ENCODE measurements at regions of chr3 and their contacts with region 1.

Region 1: GRCh38 chr3:121834696-121835464 is at the starts of genes EAF2 and IQCB1:
- DNase-seq: peak; percentile 93 to 98 (median 97)
- ATAC-seq: peak; percentile 99
- H3K4me3 ChIP-seq: peak within 1 kb of the TSS; percentile 85
- H3K4me3 Mint-ChIP-seq: peak within 1 kb of the TSS; percentile 83 to 97 (median 93)
- H3K27ac ChIP-seq: peak within 1 kb of the TSS; percentile 89
- H3K27ac Mint-ChIP-seq: peak within 1 kb of the TSS; percentile 78 to 98 (median 92)
- H3K4me1 ChIP-seq: peaks cover 10 to 14% of the 10 kb centered on the region in 2 donors
- H3K4me1 Mint-ChIP-seq: peaks cover 32 to 65% (median 58%) of the 10 kb centered on the region in 7 donors
- H3K27me3 ChIP-seq: no peaks in the 10 kb centered on the region
- H3K27me3 Mint-ChIP-seq: no peaks in the 10 kb centered on the region
- total RNA-seq, gene EAF2: 6.4 to 16.1 (median 7.5) TPM
- total RNA-seq, gene IQCB1: 32.6 to 45.6 (median 35.8) TPM

Region 2: DNA sequence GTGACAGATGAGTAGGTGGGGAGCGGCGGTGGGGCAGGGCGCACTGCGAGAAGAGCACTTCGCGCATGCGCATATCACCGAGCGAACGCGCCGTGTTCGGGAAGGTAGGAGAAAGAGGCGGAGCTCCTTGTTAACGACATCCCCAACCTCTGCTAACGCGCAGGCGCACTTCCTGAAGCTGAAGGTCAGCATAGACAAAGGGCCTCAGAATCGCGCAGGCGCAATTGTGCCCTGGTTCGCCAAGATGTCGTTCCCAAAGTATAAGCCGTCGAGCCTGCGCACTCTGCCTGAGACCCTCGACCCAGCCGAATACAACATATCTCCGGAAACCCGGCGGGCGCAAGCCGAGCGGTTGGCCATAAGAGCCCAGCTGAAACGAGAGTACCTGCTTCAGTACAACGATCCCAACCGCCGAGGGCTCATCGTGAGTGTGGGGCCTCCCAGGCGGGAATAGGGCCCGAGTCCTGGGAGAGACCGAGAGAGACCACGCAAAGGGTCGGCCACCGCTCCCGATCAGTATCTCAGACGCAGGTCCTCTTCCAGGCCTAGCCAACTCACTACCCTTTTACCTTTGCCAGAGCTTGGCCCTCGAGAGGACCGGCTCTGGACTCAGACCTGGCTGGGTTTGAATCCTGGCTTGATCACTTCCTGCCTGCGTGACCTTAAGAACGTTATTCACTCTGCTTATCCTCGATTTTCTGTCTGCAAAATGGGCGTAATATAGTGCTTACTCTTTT is 1238.6 kb before region 1 on chr3 and contains the start of gene NDUFB4:
- CTCF ChIA-PET with region 1: no interaction called
- POLR2A ChIA-PET with region 1: no interaction called
- intact Hi-C with region 1: loop called in 1 of 2 experiments (anchors 2 kb)
- DNase-seq: peak; percentile 84 to 97 (median 93)
- ATAC-seq: peak; percentile 97
- H3K4me3 ChIP-seq: peak within 1 kb of the TSS; percentile 99
- H3K4me3 Mint-ChIP-seq: peak within 1 kb of the TSS in 8 of 10 donors; percentile 85 to 99 (median 96)
- H3K27ac ChIP-seq: peak within 1 kb of the TSS; percentile 92
- H3K27ac Mint-ChIP-seq: peak within 1 kb of the TSS in 5 of 9 donors; percentile 94 to 99 (median 98)
- H3K4me1 ChIP-seq: peaks cover 25 to 27% of the 10 kb centered on the region in 2 donors
- H3K4me1 Mint-ChIP-seq: peaks cover 0 to 20% (median 11%) of the 10 kb centered on the region in 7 donors
- H3K27me3 ChIP-seq: no peaks in the 10 kb centered on the region
- H3K27me3 Mint-ChIP-seq: peaks cover 0 to 20% (median 0%) of the 10 kb centered on the region in 5 donors
- total RNA-seq, gene NDUFB4: 63.4 to 126 (median 76.2) TPM

Region 3: DNA sequence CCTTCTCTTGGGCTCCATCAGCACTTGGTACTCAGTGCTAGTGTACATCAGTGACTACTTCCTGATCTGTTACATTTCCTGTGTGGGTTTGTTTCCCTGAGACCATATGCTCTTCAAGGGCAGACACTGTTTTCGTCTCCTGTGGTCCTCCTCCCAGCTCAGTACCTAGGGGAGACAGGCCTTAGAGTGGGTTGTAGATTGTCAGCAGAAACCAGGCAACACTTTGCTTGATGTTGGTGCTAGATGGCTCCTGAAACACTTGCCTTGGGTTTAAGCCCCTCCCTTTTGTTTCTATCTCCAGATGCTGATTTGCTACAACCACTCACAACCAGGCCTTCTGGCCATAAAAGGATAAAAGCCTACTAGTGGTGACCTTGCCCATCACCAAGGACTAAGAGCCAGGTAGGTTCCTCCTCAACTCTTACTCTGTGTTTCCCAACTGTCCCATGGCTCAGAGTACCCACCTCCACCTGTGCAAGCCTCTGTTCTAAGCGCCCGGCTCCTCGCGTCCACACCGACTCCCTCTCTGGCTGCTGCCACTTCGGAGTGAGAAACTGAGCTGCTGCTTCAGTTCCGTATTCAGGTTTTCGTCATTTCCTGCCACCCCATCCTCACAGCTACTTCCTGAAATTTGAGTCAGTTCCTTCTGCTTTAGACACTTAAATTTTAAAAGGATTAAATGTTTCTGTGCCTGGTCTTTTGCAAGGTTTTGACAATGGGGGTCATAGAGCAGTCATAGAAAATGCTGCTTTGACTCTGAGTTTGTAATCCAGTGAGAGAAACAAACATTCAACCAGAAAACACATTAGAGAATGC is 174.3 kb before region 1 on chr3 and contains the start of gene HCLS1:
- CTCF ChIA-PET with region 1: no interaction called
- POLR2A ChIA-PET with region 1: interaction called, 4 read pairs
- intact Hi-C with region 1: loop called (anchors 1 kb)
- DNase-seq: peak; percentile 60 to 87 (median 79)
- ATAC-seq: peak; percentile 87
- H3K4me3 ChIP-seq: peak within 1 kb of the TSS; percentile 90
- H3K4me3 Mint-ChIP-seq: peak within 1 kb of the TSS; percentile 82 to 99 (median 95)
- H3K27ac ChIP-seq: peak within 1 kb of the TSS; percentile 90
- H3K27ac Mint-ChIP-seq: peak within 1 kb of the TSS; percentile 96 to 100 (median 99)
- H3K4me1 ChIP-seq: peaks cover 34 to 41% of the 10 kb centered on the region in 2 donors
- H3K4me1 Mint-ChIP-seq: peaks cover 41 to 68% (median 57%) of the 10 kb centered on the region in 7 donors
- H3K27me3 ChIP-seq: no peaks in the 10 kb centered on the region
- H3K27me3 Mint-ChIP-seq: no peaks in the 10 kb centered on the region
- total RNA-seq, gene HCLS1: 275 to 357 (median 311) TPM

Region 4: GRCh38 chr3:122356415-122356814 is 521.5 kb after region 1 on chr3:
- CTCF ChIA-PET with region 1: no interaction called
- POLR2A ChIA-PET with region 1: no interaction called
- intact Hi-C with region 1: loop called in 1 of 2 experiments (anchors 10 kb)
- DNase-seq: peak in 6 of 9 donors; percentile 6 to 32 (median 21)
- ATAC-seq: peak; percentile 36
- H3K4me3 ChIP-seq: no peak overlapping the region
- H3K4me3 Mint-ChIP-seq: no peak overlapping the region
- H3K27ac ChIP-seq: no peak overlapping the region
- H3K27ac Mint-ChIP-seq: no peak overlapping the region
- H3K4me1 ChIP-seq: no peaks in the 10 kb centered on the region
- H3K4me1 Mint-ChIP-seq: peaks cover 0 to 13% (median 0%) of the 10 kb centered on the region in 7 donors
- H3K27me3 ChIP-seq: no peaks in the 10 kb centered on the region
- H3K27me3 Mint-ChIP-seq: peaks cover 0 to 1% (median 0%) of the 10 kb centered on the region in 5 donors

Region 5: DNA sequence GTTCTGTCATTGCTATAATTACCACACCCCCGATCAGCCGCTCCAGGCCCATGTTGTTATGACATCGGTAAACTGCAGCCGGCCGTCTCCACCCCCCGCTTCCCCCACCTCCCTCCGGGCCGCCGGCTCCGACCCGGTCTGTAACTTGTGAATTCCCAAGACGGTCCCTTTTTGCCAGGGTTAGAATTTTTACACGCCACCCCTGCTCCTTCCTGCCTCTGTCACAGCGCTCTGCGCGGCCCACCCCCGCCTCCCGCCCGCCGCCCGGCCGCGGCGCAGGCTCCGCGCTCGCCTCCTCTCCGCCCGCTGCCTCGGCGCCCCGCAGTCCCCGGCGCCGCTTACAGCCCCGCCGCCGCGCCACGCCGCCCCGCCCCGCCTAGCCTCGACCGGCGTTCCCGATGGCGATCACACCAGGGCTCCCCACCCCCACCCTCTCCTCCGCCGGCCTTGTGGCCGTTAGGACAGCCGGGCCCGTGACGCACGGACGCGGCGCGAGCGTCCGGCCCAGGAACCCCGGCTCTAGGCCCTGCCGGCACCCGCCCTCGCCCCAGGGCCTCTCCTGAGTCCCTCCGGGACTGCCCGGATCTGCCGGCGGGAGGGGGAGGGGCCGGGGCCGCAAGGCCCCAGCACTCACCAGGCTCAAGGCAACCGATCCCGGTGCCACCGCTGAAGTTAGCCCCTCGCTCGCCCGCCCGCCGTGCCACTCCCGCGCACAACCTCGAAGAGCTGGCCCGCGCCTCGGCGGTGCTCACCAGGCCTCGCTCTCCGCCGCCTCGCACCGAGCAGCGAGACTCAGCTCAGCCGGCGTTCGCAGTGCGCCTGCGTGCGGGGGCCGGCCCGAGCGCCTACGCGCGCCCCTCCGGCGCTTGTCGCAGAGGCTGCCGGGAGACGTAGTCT is 679.5 kb after region 1 on chr3 and contains the start of gene KPNA1:
- CTCF ChIA-PET with region 1: no interaction called
- POLR2A ChIA-PET with region 1: no interaction called
- intact Hi-C with region 1: loop called (anchors 1 to 10 kb)
- DNase-seq: peak; percentile 81 to 92 (median 90)
- ATAC-seq: peak; percentile 92
- H3K4me3 ChIP-seq: peak within 1 kb of the TSS; percentile 80
- H3K4me3 Mint-ChIP-seq: peak within 1 kb of the TSS; percentile 77 to 100 (median 92)
- H3K27ac ChIP-seq: peak within 1 kb of the TSS; percentile 100
- H3K27ac Mint-ChIP-seq: peak within 1 kb of the TSS; percentile 78 to 97 (median 91)
- H3K4me1 ChIP-seq: peaks cover 6 to 21% of the 10 kb centered on the region in 2 donors
- H3K4me1 Mint-ChIP-seq: peaks cover 35 to 52% (median 46%) of the 10 kb centered on the region in 7 donors
- H3K27me3 ChIP-seq: no peaks in the 10 kb centered on the region
- H3K27me3 Mint-ChIP-seq: no peaks in the 10 kb centered on the region
- total RNA-seq, gene KPNA1: 50.6 to 70.2 (median 54.3) TPM

Region 6: GRCh38 chr3:122793568-122794416 is 958.9 kb after region 1 on chr3 and contains the start of gene HSPBAP1:
- CTCF ChIA-PET with region 1: no interaction called
- POLR2A ChIA-PET with region 1: no interaction called
- intact Hi-C with region 1: loop called in 1 of 2 experiments (anchors 5 kb)
- DNase-seq: peak; percentile 71 to 90 (median 86)
- ATAC-seq: peak; percentile 77
- H3K4me3 ChIP-seq: peak within 1 kb of the TSS; percentile 83
- H3K4me3 Mint-ChIP-seq: peak within 1 kb of the TSS in 5 of 10 donors; percentile 91 to 97 (median 95)
- H3K27ac ChIP-seq: peak within 1 kb of the TSS; percentile 82
- H3K27ac Mint-ChIP-seq: peak within 1 kb of the TSS in 6 of 9 donors; percentile 79 to 99 (median 96)
- H3K4me1 ChIP-seq: peaks cover 22 to 34% of the 10 kb centered on the region in 2 donors
- H3K4me1 Mint-ChIP-seq: peaks cover 20 to 29% (median 27%) of the 10 kb centered on the region in 7 donors
- H3K27me3 ChIP-seq: no peaks in the 10 kb centered on the region
- H3K27me3 Mint-ChIP-seq: no peaks in the 10 kb centered on the region
- total RNA-seq, gene HSPBAP1: 9.0 to 31.5 (median 23.3) TPM

Region 7: DNA sequence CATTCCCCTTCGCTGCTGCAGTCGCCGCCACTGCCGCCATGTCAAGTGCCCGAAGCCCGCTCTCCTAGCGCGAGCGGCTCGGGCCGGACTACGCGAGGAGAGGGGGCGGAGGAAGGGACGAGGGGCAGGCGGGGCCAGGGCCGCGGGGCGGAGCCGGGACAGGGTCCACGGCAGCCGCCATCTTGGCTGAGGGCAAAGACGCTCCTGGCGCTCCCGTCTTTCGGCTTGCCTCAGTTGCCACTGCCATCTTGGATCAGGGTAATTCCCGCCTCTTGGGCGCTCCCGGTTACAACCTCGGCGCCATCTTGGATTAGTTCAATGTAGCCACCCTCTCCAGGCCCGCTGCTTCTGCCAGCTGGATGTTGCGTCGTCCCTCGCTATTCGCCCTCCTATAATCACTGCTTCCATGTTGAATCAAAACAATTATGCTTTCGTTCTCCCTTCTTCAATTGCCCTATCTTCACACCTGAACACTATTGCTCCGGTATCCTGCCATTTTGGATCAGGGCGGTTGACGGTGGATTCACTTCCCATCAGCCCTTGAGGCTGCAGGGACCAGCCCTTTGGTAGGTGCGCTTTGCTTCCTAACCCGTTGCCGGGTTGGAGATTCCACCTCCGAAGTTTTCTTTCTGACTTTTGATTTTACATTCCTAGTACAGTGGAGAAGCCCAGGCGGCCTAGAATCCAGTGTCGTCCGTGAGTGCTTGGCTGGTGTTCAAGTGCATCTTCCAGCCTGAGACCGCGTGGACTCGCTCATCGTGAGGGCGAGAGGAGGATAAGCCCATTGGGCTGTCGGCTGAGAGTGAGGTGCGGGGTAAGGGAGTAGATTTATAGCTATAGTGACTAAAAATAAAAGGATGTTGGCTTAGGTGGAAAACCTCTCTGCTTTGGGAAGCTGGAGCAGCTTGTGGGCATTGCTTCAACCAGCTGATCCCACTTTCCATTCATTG is 1750.4 kb after region 1 on chr3 and contains the start of gene HACD2:
- CTCF ChIA-PET with region 1: no interaction called
- POLR2A ChIA-PET with region 1: no interaction called
- intact Hi-C with region 1: loop called (anchors 2 to 10 kb)
- DNase-seq: peak; percentile 87 to 96 (median 90)
- ATAC-seq: peak; percentile 96
- H3K4me3 ChIP-seq: peak within 1 kb of the TSS; percentile 98
- H3K4me3 Mint-ChIP-seq: peak within 1 kb of the TSS in 3 of 10 donors; percentile 87 to 90 (median 89)
- H3K27ac ChIP-seq: peak within 1 kb of the TSS; percentile 79
- H3K27ac Mint-ChIP-seq: peak within 1 kb of the TSS; percentile 44 to 93 (median 83)
- H3K4me1 ChIP-seq: peaks cover 8 to 13% of the 10 kb centered on the region in 2 donors
- H3K4me1 Mint-ChIP-seq: peaks cover 14 to 32% (median 30%) of the 10 kb centered on the region in 7 donors
- H3K27me3 ChIP-seq: no peaks in the 10 kb centered on the region
- H3K27me3 Mint-ChIP-seq: no peaks in the 10 kb centered on the region
- total RNA-seq, gene HACD2: 15.9 to 28.3 (median 24.0) TPM

Measured in naive thymus-derived CD4-positive, alpha-beta T cell (primary cell).